ENCODE measurements at regions of chr4 and their contacts with region 1.

Region 1: DNA sequence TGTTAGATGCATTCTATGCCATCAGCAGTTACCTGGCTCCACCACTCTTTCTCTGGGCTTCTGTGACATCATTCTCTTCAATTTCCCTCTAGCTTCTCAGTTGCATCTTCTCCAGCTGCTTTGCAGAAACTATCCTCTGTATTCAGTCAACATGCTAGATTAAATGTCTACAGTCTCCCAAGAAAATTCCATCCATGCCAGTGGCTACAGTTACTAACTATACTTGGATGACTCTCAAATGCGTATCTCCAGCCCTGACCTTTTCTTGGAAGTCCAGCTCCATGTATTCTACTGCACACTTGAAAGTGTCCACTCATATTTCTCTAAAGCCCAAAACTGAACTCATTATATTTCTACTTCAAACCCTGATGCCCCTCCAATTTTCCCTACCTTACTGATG is 232.3 kb upstream of the TENM3 start:
- DNase-seq: no peak
- H3K4me3 ChIP-seq: no peak overlapping the region
- H3K27ac ChIP-seq: no peak overlapping the region
- H3K4me1 ChIP-seq: no peaks in the 10 kb centered on the region
- H3K27me3 ChIP-seq: no peaks in the 10 kb centered on the region
- CTCF ChIP-seq: no peak
- EP300 ChIP-seq: no peak
- POLR2A ChIP-seq: no peak

Region 2: GRCh38 chr4:181897935-181898334 is 112.9 kb before region 1 on chr4:
- intact Hi-C with region 1: no loop called
- DNase-seq: no peak
- H3K4me3 ChIP-seq: no peak overlapping the region
- H3K27ac ChIP-seq: no peak overlapping the region
- H3K4me1 ChIP-seq: no peaks in the 10 kb centered on the region
- H3K27me3 ChIP-seq: no peaks in the 10 kb centered on the region
- CTCF ChIP-seq: no peak
- EP300 ChIP-seq: no peak
- POLR2A ChIP-seq: no peak

Region 3: GRCh38 chr4:181939199-181939945 is 71.5 kb before region 1 on chr4:
- intact Hi-C with region 1: no loop called
- DNase-seq: no peak
- H3K4me3 ChIP-seq: peak overlapping the region in 2 of 4 donors; percentile 1 to 15
- H3K27ac ChIP-seq: no peak overlapping the region
- H3K4me1 ChIP-seq: peaks cover 0 to 10% (median 0%) of the 10 kb centered on the region in 4 donors
- H3K27me3 ChIP-seq: no peaks in the 10 kb centered on the region
- CTCF ChIP-seq: no peak
- EP300 ChIP-seq: no peak
- POLR2A ChIP-seq: no peak

Region 4: DNA sequence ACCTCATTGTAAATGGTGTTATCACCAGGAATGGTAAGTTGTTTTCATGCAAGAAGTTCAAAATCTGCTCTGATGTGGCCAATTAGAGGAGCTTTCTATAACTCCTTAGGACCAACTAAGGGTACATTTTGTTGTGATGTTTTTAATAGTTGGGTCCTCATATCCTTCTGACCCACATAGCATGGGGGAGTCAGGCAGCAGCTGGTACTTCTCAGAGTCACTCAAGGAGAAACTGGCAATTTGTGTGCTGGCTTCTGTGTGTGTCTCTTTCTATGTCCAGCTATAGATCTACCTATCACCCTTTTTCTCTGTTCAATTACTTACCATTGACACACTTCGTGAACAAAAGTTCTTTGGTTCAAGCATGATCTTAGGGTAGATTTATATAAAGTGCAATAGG is 38.0 kb after region 1 on chr4:
- intact Hi-C with region 1: loop called (anchors 2 kb)
- DNase-seq: no peak
- H3K4me3 ChIP-seq: no peak overlapping the region
- H3K27ac ChIP-seq: no peak overlapping the region
- H3K4me1 ChIP-seq: no peaks in the 10 kb centered on the region
- H3K27me3 ChIP-seq: no peaks in the 10 kb centered on the region
- CTCF ChIP-seq: no peak
- EP300 ChIP-seq: no peak
- POLR2A ChIP-seq: no peak